Activated naive CD4-positive, alpha-beta T cell treated with anti-CD3 and anti-CD28 coated beads for 36 hours (primary cell): ENCODE measurements at regions of chr10 and their contacts with region 1.

Region 1: DNA sequence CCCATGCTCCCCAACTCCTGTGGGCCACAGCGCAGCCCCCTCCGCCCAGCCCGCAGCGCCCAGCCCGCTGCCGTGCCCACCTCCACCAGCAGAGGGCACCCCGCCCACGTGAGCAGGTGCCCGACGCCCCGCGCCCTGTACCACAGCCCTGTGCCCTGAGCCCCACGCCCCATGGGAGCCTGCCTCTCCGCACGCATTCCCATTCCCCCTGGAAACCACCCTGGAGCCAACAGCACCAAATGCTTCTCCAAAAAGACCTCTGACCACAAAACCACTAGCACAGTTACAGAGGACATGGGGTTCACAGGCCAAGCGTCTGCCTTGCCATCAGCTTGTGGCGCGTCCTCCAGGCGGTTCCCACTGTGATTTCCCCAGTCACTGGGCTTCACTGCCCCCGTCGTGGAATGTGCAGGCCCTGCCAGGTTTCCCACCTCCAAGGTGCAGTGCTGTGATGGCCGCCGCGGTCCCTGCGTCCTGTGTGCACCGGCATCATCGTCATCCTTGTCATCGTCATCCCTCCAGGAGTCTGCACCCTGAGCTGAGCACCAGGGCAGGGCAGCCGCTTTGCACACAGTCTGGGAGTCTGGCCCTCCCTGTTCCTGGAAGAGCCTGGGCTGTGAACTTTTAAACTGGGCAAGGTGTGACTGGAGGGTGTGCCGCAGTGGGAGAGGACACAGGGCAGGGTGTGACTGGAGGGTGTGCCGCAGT is 61.7 kb downstream of the PWWP2B start:
- DNase-seq: peak; percentile 60
- H3K4me3 Mint-ChIP-seq: no peak overlapping the region
- H3K27ac Mint-ChIP-seq: no peak overlapping the region
- H3K4me1 Mint-ChIP-seq: peaks cover 2% of the 10 kb centered on the region
- H3K27me3 Mint-ChIP-seq: no peaks in the 10 kb centered on the region

Region 2: DNA sequence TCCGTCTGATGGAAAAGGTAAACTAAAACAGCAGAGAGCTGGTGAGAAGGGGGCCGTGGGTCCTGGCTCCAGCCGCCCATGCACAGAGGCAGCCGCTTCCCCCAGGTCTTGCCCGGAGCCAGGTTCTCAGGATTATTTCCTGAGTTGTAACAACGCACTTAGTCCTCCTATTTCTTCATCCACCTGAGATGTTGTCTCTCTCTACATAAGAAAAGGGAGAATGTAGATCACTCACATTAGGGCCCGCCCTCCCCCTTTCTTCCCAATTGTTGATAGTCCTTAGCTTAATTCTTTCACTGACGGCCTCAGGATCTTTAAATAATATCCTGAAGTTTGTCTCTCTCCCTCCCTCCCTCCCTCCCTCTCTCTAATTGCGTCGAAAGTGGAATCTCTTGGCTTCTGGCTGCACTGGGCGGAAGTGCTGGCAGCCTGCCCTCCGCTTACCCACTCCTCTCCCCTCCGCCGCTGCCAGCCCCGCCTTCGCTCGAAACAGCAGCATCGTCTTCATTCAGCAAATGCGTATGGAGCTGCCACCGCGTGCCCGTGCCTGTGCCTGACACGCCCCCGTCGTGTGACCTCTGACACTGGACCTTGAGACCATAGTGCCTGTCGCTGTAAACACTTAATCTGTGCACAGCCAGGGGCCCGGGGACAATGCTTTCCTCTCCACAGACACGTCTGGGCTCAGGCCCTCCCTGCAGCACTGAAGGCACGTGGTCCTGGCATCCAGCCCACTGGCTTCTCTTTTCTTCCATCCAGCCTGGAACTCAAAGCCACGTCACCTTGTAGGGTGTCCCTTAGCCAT is 732.5 kb before region 1 on chr10:
- CTCF ChIA-PET with region 1: no interaction called
- intact Hi-C with region 1: no loop called
- DNase-seq: no peak
- H3K4me3 Mint-ChIP-seq: no peak overlapping the region
- H3K27ac Mint-ChIP-seq: no peak overlapping the region
- H3K4me1 Mint-ChIP-seq: peaks cover 1% of the 10 kb centered on the region
- H3K27me3 Mint-ChIP-seq: peaks cover 12% of the 10 kb centered on the region

Region 3: GRCh38 chr10:132299371-132300336 is 159.1 kb before region 1 on chr10:
- CTCF ChIA-PET with region 1: no interaction called
- intact Hi-C with region 1: no loop called
- DNase-seq: no peak
- H3K4me3 Mint-ChIP-seq: no peak overlapping the region
- H3K27ac Mint-ChIP-seq: no peak overlapping the region
- H3K4me1 Mint-ChIP-seq: peaks cover 4% of the 10 kb centered on the region
- H3K27me3 Mint-ChIP-seq: no peaks in the 10 kb centered on the region

Region 4: GRCh38 chr10:132551093-132551807 is 92.5 kb after region 1 on chr10:
- CTCF ChIA-PET with region 1: interaction called, 4 read pairs
- intact Hi-C with region 1: loop called (anchors 1 kb)
- DNase-seq: peak; percentile 76
- H3K4me3 Mint-ChIP-seq: peak overlapping the region; percentile 72
- H3K27ac Mint-ChIP-seq: peak overlapping the region; percentile 69
- H3K4me1 Mint-ChIP-seq: peaks cover 40% of the 10 kb centered on the region
- H3K27me3 Mint-ChIP-seq: no peaks in the 10 kb centered on the region

Region 5: DNA sequence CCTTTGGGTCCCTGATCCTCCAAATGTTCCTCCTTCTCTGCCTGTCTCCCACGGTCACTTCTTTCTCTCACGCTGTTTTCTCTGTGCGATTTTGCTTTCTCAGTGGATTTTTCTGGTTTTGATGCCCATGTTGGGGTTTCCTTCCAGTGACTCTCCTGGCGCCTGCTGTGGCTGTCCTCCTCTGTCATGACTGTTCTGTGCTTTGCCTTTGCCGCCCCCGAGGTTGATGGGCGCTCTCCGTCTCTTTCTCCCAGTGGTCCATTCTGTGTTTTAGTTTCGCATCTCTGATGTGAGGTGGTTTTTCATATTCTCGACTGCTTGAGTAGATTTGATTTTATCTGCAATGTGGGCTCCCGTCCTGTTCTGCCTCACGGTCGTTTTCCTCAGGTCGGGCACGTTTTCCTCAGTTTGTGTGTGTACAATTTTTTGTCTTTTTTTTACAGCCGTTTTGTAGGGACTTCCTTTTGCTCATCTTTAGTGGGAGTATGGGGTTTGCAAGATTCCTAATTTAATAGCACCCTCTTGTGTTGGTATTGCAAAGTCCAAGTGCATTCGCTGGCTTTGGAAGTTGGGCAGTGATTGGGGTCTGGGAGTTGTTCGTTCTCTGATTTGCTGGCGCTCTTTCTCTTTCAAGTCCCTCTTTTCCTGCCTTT is 178.9 kb after region 1 on chr10:
- CTCF ChIA-PET with region 1: interaction called, 16 read pairs
- intact Hi-C with region 1: loop called (anchors 1 kb)
- DNase-seq: peak; percentile 24
- H3K4me3 Mint-ChIP-seq: no peak overlapping the region
- H3K27ac Mint-ChIP-seq: no peak overlapping the region
- H3K4me1 Mint-ChIP-seq: peaks cover 12% of the 10 kb centered on the region
- H3K27me3 Mint-ChIP-seq: no peaks in the 10 kb centered on the region

Region 6: GRCh38 chr10:132643709-132644526 is 185.2 kb after region 1 on chr10:
- CTCF ChIA-PET with region 1: interaction called, 16 read pairs
- intact Hi-C with region 1: no loop called
- DNase-seq: no peak
- H3K4me3 Mint-ChIP-seq: no peak overlapping the region
- H3K27ac Mint-ChIP-seq: no peak overlapping the region
- H3K4me1 Mint-ChIP-seq: no peaks in the 10 kb centered on the region
- H3K27me3 Mint-ChIP-seq: no peaks in the 10 kb centered on the region

Region 7: GRCh38 chr10:132788180-132788830 is 329.6 kb after region 1 on chr10:
- CTCF ChIA-PET with region 1: no interaction called
- intact Hi-C with region 1: loop called (anchors 2 kb)
- DNase-seq: peak; percentile 23
- H3K4me3 Mint-ChIP-seq: no peak overlapping the region
- H3K27ac Mint-ChIP-seq: no peak overlapping the region
- H3K4me1 Mint-ChIP-seq: no peaks in the 10 kb centered on the region
- H3K27me3 Mint-ChIP-seq: peaks cover 23% of the 10 kb centered on the region

Region 8: DNA sequence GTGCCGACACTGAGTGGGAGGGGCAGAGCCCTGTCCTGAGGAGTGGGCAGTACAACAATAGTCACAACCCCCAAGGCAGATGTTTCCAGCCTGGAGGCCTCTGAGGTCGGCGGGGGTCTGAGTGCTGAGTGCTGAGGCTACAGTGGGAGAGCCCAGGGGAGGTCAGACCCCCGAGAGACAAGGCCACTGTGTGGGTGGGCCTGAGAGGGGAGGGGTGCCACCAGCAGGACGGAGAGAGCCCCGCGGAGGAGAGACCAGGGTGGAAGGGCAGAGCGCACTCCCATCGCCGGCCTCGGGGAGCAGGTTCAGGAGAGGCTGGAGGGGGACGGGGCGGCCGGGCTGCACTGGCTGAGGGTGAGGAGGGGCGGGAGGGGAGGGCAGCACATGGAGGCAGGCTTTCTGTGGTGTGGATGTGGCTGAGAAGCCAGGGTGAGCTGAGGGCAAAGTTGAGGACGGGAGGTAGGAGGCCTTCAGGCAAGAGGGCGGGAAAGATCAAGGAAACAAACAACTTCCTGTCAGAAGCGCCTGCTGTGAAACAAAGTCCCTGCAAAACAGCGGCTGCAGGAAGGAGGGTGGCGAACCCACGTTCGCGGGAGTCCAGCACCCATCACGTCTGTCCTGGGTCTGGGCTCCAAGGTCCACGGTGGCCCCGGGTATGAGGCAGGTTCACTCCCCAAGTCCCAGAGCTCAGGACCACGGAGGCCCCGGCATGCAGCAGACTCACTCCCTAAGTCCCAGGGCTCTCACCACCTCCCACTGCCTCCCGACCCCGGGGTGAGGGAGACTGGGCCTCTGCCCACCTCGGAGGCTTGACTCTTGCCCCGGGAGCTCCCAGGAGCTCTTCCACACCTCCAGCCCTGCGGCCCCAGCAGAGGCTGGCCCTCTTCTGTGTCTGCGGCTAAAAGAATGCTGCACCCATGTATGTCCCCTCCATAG is 404.0 kb after region 1 on chr10:
- CTCF ChIA-PET with region 1: no interaction called
- intact Hi-C with region 1: loop called (anchors 5 kb)
- DNase-seq: peak; percentile 16
- H3K4me3 Mint-ChIP-seq: no peak overlapping the region
- H3K27ac Mint-ChIP-seq: no peak overlapping the region
- H3K4me1 Mint-ChIP-seq: peaks cover 13% of the 10 kb centered on the region
- H3K27me3 Mint-ChIP-seq: peaks cover 9% of the 10 kb centered on the region